Cardiac septum (tissue), 1 donor: ENCODE measurements at regions of chr12 and their contacts with region 1.

Region 1: GRCh38 chr12:55073043-55074022 is 52.9 kb upstream of the OR9K2 start:
- DNase-seq: peak; percentile 78

Region 2: GRCh38 chr12:54749191-54749818 is 324.0 kb before region 1 on chr12:
- intact Hi-C with region 1: loop called (anchors 10 kb)
- DNase-seq: no peak

Region 3: GRCh38 chr12:54891717-54892554 is 181.4 kb before region 1 on chr12:
- intact Hi-C with region 1: no loop called
- DNase-seq: no peak

Region 4: DNA sequence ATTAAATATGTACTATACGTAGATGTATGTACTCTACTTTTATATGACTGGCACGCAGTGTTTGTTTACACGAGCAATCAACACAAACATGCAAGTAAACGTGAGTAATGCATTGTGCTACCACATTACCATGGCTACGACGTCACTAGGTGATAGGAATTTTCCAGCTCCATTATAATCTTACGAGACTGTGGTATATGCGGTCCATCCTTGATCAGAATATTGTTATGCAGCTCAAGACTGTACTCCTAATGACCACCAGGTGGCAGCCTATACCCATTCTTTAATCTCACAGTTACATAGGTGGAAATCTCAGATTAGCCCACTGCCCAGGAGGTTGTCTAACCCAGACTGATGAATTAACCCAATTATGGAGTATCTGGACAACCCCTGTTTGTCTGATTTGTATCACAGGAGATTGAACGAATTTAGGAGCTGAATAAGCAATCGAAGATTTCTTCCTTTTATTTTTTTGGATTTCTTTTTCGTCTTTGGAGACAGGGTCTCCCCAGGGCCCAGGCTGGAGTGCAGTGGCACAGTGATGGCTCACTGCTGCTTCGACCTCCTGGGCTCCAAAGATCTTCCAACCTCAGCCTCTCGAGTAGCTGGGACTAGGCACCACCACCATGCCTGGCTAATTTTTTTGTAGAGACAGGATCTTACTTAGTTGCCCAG is 80.0 kb before region 1 on chr12:
- intact Hi-C with region 1: loop called (anchors 2 kb)
- DNase-seq: no peak

Region 5: DNA sequence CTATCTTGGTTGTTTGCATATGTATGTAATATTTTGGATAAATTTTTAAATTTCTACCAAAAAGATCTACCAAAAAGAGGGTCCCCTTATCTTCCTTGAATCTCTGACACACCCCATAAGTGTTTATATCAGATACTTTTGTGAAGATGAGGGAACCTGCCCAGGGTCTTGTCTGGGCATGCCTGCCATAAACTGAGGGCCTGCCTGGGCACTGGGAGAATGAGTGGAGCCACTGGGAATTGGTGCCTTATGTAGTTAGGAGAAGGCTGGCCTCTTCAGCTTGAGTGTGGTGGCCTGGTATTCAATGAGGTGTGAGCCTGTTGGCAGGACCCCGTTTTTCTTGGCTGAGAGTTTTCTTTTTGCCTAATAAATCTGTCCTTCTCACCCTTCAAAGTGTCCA is 99.4 kb after region 1 on chr12:
- intact Hi-C with region 1: no loop called
- DNase-seq: no peak

Region 6: DNA sequence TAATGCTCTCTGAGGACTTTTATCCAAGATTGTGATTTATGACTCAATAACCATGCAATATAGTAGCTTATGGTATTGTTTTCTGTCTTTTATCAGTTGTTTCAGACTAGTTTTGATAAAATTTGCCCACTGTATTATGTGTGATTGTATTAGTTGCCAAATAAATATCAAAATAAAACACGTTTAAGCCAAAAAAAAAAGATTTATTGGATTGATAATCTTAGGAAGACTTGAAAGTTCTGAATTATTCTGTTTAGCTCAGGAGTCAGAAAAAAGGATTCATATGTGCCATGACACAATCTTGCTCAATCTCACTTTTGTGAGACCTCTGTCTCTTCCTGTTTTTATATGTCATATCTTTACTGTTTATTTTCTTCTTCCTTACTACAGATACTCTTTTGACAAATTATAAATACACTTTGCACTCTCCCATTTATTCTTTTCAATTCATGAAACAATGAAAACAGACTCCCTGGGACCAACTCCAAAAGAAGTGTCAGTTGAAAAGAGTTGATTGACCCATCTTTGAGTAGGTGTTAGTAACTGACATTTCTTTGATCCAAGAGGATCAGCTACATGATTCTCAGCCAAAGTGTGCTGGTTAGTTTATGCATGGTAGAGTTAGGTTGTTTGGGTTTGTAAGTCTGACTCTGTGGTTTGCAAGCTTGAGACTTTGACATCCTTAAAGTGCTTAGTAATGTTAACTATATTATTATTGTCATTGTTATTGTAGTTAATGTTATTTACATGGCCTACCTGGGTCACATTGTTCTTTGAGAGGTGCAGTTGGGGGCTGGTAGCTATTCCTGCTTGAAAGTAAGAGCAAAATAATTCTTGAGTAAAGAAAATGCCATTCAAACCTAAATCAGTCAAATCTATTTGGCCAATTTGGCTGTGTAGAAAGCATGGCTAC is 355.3 kb after region 1 on chr12:
- intact Hi-C with region 1: no loop called
- DNase-seq: no peak